ENCODE measurements at regions of chr5 and their contacts with region 1.

Region 1: DNA sequence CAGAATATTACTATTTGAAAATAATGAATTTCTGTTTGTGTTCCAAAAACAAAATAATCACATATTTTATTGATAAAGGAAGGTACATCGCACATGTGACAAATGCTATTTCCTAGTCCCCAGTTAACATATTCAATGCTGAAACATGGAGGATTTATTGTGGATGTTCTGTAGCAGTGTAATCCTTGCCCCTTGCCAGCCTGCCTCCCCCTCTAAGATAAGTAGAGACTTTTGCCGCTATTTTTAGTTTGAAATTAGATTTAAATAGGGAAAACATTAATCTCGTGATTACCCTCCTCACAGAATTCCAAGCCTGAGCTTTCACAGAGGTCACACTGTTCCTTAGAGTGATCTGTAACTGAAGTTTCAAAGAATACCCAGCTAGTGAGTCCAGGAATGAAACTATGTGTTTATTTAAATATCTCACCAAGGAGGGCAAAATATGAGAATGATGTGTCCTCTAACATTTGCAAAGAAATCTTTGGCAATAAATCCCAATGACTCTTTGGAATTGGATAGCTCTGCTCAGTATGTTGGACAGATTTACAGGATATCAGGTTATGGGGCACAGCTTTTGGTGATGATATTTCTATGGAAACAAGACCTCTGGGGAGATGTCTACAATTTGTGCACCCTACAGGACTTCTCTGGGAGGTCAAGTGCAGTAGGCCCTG is 17.3 kb downstream of the CTXN3 start:
- DNase-seq: no peak
- H3K27ac ChIP-seq: no peak overlapping the region
- CTCF ChIP-seq: no peak

Region 2: GRCh38 chr5:127586066-127586770 is 80.0 kb before region 1 on chr5:
- CTCF ChIA-PET with region 1: no interaction called
- POLR2A ChIA-PET with region 1: no interaction called
- DNase-seq: no peak
- H3K27ac ChIP-seq: no peak overlapping the region
- CTCF ChIP-seq: no peak

Region 3: GRCh38 chr5:128869970-128870369 is 1203.8 kb after region 1 on chr5:
- CTCF ChIA-PET with region 1: interaction called, 10 read pairs
- POLR2A ChIA-PET with region 1: no interaction called
- DNase-seq: no peak
- H3K27ac ChIP-seq: no peak overlapping the region
- CTCF ChIP-seq: no peak